ENCODE measurements at regions of chr15 and their contacts with region 1.

Region 1: DNA sequence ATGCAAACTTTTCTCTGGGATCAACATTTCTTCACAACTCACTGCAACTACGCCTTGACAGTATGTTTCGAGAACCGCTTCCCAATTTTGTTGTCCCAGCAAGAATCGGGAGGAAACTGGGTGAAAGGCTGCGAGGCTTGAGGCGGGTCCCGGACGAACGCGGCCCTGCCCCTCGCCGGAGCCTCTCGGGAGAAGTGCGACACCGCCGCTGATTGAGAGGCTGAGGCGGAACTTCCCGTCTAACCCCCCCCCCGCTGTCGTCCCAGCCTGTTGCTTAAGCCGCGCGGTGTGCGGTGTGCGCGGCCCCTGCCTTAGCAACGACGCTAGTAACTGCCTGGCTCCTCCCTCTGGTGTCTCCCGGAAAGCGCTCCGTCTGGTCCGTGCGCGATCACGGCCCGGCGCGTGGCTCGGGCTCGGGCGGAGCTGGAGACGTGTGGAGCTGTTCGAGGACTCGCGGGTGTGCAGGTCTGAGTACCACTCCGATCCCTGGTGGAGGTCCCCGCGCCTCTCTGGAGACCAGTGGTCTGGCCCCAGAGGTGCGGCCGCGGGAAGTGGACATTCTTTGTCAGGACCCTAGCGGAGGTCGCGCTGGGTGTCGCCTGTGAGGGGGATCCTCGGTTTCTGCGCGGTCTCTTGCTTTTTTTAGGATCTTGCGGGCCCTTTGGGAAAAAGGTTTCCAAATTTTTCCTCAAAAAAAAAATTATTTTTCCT is at the starts of genes DTWD1 and FAM227B:
- DNase-seq: peak; percentile 85 to 98 (median 92)
- ATAC-seq: peak; percentile 96
- H3K4me3 ChIP-seq: peak within 1 kb of the TSS; percentile 77
- H3K4me3 Mint-ChIP-seq: peak within 1 kb of the TSS; percentile 99
- H3K27ac ChIP-seq: peak within 1 kb of the TSS; percentile 64 to 75
- H3K27ac Mint-ChIP-seq: peak within 1 kb of the TSS; percentile 97
- H3K4me1 ChIP-seq: peaks cover 9% of the 10 kb centered on the region
- H3K4me1 Mint-ChIP-seq: peaks cover 54% of the 10 kb centered on the region
- H3K27me3 ChIP-seq: no peaks in the 10 kb centered on the region
- H3K27me3 Mint-ChIP-seq: no peaks in the 10 kb centered on the region
- CTCF ChIP-seq: no peak
- total RNA-seq, gene DTWD1: 10.1 to 10.2 TPM
- total RNA-seq, gene FAM227B: 3.0 to 4.4 TPM

Region 2: GRCh38 chr15:48810414-48811317 is 810.1 kb before region 1 on chr15 and contains the start of gene CEP152:
- CTCF ChIA-PET with region 1: no interaction called
- POLR2A ChIA-PET with region 1: interaction called, 5 read pairs
- intact Hi-C with region 1: loop called in 1 of 2 experiments (anchors 2 kb)
- DNase-seq: peak; percentile 95 to 99 (median 98)
- ATAC-seq: peak; percentile 96
- H3K4me3 ChIP-seq: peak within 1 kb of the TSS; percentile 95
- H3K4me3 Mint-ChIP-seq: peak within 1 kb of the TSS; percentile 85
- H3K27ac ChIP-seq: peak within 1 kb of the TSS in 1 of 2 donors; percentile 43
- H3K27ac Mint-ChIP-seq: peak within 1 kb of the TSS; percentile 74
- H3K4me1 ChIP-seq: peaks cover 17% of the 10 kb centered on the region
- H3K4me1 Mint-ChIP-seq: peaks cover 41% of the 10 kb centered on the region
- H3K27me3 ChIP-seq: no peaks in the 10 kb centered on the region
- H3K27me3 Mint-ChIP-seq: no peaks in the 10 kb centered on the region
- CTCF ChIP-seq: no peak
- total RNA-seq, gene CEP152: 5.2 to 6.3 TPM

Region 3: DNA sequence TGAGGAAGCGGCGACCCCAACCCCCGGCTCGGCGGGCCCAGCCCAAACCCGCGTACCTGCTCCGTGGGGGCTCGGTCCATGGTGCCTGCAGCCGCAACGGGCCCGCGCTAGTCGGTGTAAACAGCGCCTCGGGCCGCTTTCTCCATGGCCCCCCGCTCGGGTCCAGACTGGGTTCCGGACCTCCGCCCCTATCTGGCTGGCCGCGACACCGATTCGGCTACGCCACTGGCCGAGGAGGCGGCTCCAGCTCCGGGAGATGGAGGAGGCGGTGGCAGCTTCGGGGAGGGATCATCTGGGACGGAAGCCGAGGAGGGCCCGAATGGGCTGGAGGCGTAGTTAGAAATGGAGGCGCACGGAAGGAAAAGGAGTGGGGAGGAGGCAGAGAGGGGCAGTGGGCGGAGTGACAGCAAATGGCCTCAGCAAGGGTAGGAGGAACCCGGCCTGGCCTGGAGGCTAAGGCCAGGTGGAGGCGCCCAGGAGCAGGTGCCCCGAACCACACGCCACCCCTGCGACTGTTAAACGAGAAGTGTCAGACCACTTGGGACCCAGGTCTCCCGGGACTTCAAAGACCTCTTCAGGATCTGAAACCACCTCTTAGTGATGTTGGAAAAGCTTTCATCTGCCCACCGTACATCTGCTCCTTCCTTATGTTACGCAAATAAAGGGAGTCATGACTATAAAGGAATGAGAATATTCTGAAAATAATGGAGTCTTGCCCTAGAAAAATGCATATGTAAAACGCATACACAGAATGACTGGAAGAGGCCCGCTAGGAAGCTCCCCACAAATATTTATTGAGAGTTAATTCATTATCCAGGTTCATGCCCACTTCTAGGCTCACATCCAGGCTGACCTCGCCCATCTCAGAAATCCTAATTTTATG is 574.4 kb before region 1 on chr15 and contains the start of gene SECISBP2L:
- CTCF ChIA-PET with region 1: no interaction called
- POLR2A ChIA-PET with region 1: interaction called, 9 read pairs
- intact Hi-C with region 1: loop called in 1 of 2 experiments (anchors 5 kb)
- DNase-seq: peak; percentile 79 to 95 (median 84)
- ATAC-seq: peak; percentile 95
- H3K4me3 ChIP-seq: peak within 1 kb of the TSS; percentile 66
- H3K4me3 Mint-ChIP-seq: peak within 1 kb of the TSS; percentile 98
- H3K27ac ChIP-seq: peak within 1 kb of the TSS; percentile 5 to 52
- H3K27ac Mint-ChIP-seq: peak within 1 kb of the TSS; percentile 92
- H3K4me1 ChIP-seq: peaks cover 11% of the 10 kb centered on the region
- H3K4me1 Mint-ChIP-seq: peaks cover 42% of the 10 kb centered on the region
- H3K27me3 ChIP-seq: no peaks in the 10 kb centered on the region
- H3K27me3 Mint-ChIP-seq: no peaks in the 10 kb centered on the region
- CTCF ChIP-seq: no peak
- total RNA-seq, gene SECISBP2L: 55.9 to 56.0 TPM

Region 4: DNA sequence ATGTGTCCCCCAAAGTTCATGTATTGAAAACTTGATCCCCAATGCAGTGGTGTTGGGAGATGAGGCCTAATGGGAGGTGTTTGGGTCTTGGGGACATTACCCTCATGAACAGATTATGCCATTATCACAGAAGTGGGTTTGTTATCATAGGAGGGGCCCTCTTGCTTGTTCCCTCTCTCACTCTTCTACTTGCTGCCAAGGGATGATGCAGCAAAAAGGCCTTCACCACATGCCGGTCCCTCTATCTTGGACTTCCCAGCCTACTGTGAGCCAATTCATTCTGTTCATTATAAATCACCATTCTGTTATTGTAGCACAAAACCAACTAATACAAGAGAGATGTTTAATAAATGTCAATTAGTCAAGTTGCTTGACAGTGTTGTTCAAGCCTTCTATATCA is 47.4 kb before region 1 on chr15:
- CTCF ChIA-PET with region 1: no interaction called
- POLR2A ChIA-PET with region 1: no interaction called
- intact Hi-C with region 1: no loop called
- DNase-seq: no peak
- ATAC-seq: no peak
- H3K4me3 ChIP-seq: no peak overlapping the region
- H3K4me3 Mint-ChIP-seq: no peak overlapping the region
- H3K27ac ChIP-seq: no peak overlapping the region
- H3K27ac Mint-ChIP-seq: no peak overlapping the region
- H3K4me1 ChIP-seq: no peaks in the 10 kb centered on the region
- H3K4me1 Mint-ChIP-seq: no peaks in the 10 kb centered on the region
- H3K27me3 ChIP-seq: no peaks in the 10 kb centered on the region
- H3K27me3 Mint-ChIP-seq: no peaks in the 10 kb centered on the region
- CTCF ChIP-seq: no peak

Region 5: DNA sequence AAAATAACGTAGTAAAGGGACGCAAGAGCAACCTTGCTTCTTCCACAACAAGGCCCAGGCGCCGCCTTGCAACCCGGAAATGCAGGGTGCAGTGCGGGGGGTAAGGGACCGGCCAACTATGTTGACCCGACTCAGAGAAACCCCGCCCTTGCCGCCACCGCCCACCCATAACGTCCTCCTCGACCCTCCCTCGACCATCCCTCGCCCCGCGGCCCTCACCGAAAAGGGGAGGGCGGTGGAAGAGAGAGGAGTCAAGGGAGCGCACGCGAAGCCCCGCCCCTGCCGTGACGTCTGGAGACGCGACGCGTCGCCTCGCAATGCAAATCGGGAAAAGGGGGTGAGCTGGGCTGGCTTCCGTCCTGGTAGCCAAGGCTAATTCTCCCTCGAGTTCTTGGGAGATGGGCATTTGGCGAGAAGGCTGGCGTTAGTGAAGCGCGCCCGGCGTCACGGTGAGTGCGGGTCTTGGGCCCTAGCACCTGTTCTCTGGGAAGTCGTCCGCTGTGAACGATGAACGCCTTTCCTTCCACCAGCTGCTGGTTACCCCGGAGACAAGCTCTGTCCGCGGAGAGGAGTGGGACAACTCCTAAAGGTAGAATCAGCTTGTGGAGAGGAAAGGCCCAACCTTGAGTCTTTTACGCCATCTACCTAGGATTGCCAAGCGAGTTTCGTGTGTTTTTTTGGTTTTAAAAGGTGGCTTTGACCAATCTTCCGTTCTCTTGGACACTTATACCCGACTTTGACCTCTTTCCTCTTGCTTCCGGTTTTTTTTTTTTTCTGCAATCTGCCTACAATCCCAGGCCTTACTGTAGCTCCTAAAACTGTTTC is 803.5 kb after region 1 on chr15 and contains the start of gene USP8:
- CTCF ChIA-PET with region 1: no interaction called
- POLR2A ChIA-PET with region 1: interaction called, 6 read pairs
- intact Hi-C with region 1: loop called in 1 of 2 experiments (anchors 5 kb)
- DNase-seq: peak; percentile 84 to 96 (median 89)
- ATAC-seq: peak; percentile 97
- H3K4me3 ChIP-seq: peak within 1 kb of the TSS; percentile 87
- H3K4me3 Mint-ChIP-seq: peak within 1 kb of the TSS; percentile 97
- H3K27ac ChIP-seq: peak within 1 kb of the TSS; percentile 86 to 96
- H3K27ac Mint-ChIP-seq: peak within 1 kb of the TSS; percentile 93
- H3K4me1 ChIP-seq: peaks cover 34% of the 10 kb centered on the region
- H3K4me1 Mint-ChIP-seq: peaks cover 45% of the 10 kb centered on the region
- H3K27me3 ChIP-seq: no peaks in the 10 kb centered on the region
- H3K27me3 Mint-ChIP-seq: no peaks in the 10 kb centered on the region
- CTCF ChIP-seq: no peak
- total RNA-seq, gene USP8: 48.9 to 50.0 TPM

Region 6: GRCh38 chr15:50908210-50909009 is 1287.6 kb after region 1 on chr15 and contains the start of gene AP4E1:
- CTCF ChIA-PET with region 1: no interaction called
- POLR2A ChIA-PET with region 1: interaction called, 5 read pairs
- intact Hi-C with region 1: loop called in 1 of 2 experiments (anchors 10 kb)
- DNase-seq: peak; percentile 89 to 97 (median 93)
- ATAC-seq: peak; percentile 40
- H3K4me3 ChIP-seq: peak within 1 kb of the TSS; percentile 80
- H3K4me3 Mint-ChIP-seq: peak within 1 kb of the TSS; percentile 94
- H3K27ac ChIP-seq: peak within 1 kb of the TSS; percentile 91 to 100
- H3K27ac Mint-ChIP-seq: peak within 1 kb of the TSS; percentile 98
- H3K4me1 ChIP-seq: peaks cover 19% of the 10 kb centered on the region
- H3K4me1 Mint-ChIP-seq: peaks cover 29% of the 10 kb centered on the region
- H3K27me3 ChIP-seq: no peaks in the 10 kb centered on the region
- H3K27me3 Mint-ChIP-seq: no peaks in the 10 kb centered on the region
- CTCF ChIP-seq: peak; percentile 87
- total RNA-seq, gene AP4E1: 6.3 to 6.6 TPM

Measured in CD4-positive, alpha-beta T cell (primary cell).